ENCODE measurements at regions of chr3 and their contacts with region 1.

Region 1: DNA sequence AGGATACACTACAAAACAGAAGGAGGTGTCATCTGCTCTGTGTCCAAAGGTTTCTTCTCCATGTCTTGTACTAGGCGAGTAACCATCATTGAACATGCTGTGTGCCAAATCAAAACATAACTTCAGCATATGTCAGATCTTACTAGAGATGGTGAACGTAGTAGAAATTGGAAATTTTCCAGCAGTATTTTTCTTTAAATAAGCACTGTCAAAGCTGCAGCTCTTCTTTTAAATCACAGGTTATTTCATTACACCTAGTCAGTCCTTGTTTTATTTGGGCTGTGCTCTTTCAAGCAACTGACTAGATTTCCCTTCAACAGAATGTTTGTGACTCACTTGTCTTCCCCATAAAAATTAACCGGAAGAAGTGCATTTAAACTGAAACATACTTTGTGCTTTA is 46.5 kb downstream of the MSL2 start:
- DNase-seq: no peak
- ATAC-seq: no peak
- H3K4me3 ChIP-seq: no peak overlapping the region
- H3K4me3 Mint-ChIP-seq: no peak overlapping the region
- H3K27ac ChIP-seq: no peak overlapping the region
- H3K27ac Mint-ChIP-seq: no peak overlapping the region
- H3K4me1 ChIP-seq: peaks cover 24% of the 10 kb centered on the region
- H3K4me1 Mint-ChIP-seq: peaks cover 67% of the 10 kb centered on the region
- H3K27me3 ChIP-seq: no peaks in the 10 kb centered on the region
- H3K27me3 Mint-ChIP-seq: no peaks in the 10 kb centered on the region
- CTCF ChIP-seq: no peak

Region 2: GRCh38 chr3:136171097-136171542 is 21.5 kb after region 1 on chr3:
- CTCF ChIA-PET with region 1: no interaction called
- POLR2A ChIA-PET with region 1: no interaction called
- intact Hi-C with region 1: loop called in 1 of 2 experiments (anchors 2 kb)
- DNase-seq: no peak
- ATAC-seq: no peak
- H3K4me3 ChIP-seq: no peak overlapping the region
- H3K4me3 Mint-ChIP-seq: peak overlapping the region; percentile 3
- H3K27ac ChIP-seq: peak overlapping the region in 1 of 2 experiments; percentile 1
- H3K27ac Mint-ChIP-seq: no peak overlapping the region
- H3K4me1 ChIP-seq: peaks cover 78% of the 10 kb centered on the region
- H3K4me1 Mint-ChIP-seq: peaks cover 42% of the 10 kb centered on the region
- H3K27me3 ChIP-seq: no peaks in the 10 kb centered on the region
- H3K27me3 Mint-ChIP-seq: no peaks in the 10 kb centered on the region
- CTCF ChIP-seq: no peak

Region 3: GRCh38 chr3:137460944-137461343 is 1311.3 kb after region 1 on chr3:
- CTCF ChIA-PET with region 1: no interaction called
- POLR2A ChIA-PET with region 1: no interaction called
- intact Hi-C with region 1: no loop called
- DNase-seq: no peak
- ATAC-seq: no peak
- H3K4me3 ChIP-seq: no peak overlapping the region
- H3K4me3 Mint-ChIP-seq: no peak overlapping the region
- H3K27ac ChIP-seq: no peak overlapping the region
- H3K27ac Mint-ChIP-seq: no peak overlapping the region
- H3K4me1 ChIP-seq: no peaks in the 10 kb centered on the region
- H3K4me1 Mint-ChIP-seq: no peaks in the 10 kb centered on the region
- H3K27me3 ChIP-seq: no peaks in the 10 kb centered on the region
- H3K27me3 Mint-ChIP-seq: no peaks in the 10 kb centered on the region
- CTCF ChIP-seq: no peak

Measured in CD8-positive, alpha-beta T cell (primary cell).